Left cardiac atrium (tissue), 4 donors: ENCODE measurements at regions of chr1 and their contacts with region 1.

Region 1: GRCh38 chr1:234065794-234066447 is 161.4 kb downstream of the SLC35F3 start:
- DNase-seq: peak; percentile 86
- ATAC-seq: peak; percentile 44 to 68

Region 2: DNA sequence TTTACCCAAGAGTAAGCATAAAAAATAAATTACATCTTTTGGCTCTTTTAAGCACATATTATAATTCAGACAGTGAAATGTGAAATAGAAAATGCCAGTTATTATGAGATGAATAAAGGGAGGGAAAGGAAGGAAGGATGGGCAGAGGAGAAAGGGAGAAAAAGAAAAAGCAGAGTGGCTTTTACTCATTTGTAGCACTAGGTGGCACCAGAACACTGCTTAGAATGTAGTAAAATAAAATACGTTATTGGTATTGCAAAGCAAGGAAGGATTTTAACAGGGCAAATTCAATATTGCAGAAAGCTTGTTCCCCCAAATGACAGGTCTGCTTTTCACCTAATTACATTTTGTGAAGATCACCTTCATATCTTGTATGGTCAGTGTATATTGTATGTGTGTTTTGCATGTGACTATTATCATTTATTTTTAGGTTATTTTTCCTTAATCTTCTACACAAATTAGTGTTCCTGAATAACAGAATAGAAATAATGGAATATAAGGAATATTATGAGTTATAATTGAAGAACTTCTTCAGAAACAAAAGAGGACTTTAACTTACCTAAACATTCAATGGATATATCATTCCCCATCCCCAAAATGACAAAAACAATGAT is 761.3 kb before region 1 on chr1:
- intact Hi-C with region 1: loop called (anchors 5 to 10 kb)
- DNase-seq: no peak
- ATAC-seq: no peak

Region 3: GRCh38 chr1:233364695-233365539 is 701.0 kb before region 1 on chr1:
- intact Hi-C with region 1: loop called in 1 of 2 experiments (anchors 10 kb)
- DNase-seq: no peak
- ATAC-seq: no peak

Region 4: GRCh38 chr1:233394860-233395717 is 670.8 kb before region 1 on chr1:
- intact Hi-C with region 1: loop called in 1 of 2 experiments (anchors 2 kb)
- DNase-seq: no peak
- ATAC-seq: peak; percentile 76 to 77

Region 5: GRCh38 chr1:233440951-233441401 is 624.9 kb before region 1 on chr1:
- intact Hi-C with region 1: loop called in 1 of 2 experiments (anchors 5 kb)
- DNase-seq: no peak
- ATAC-seq: peak; percentile 50 to 71